HEK293 (cell line): ENCODE measurements at regions of chr20 and their contacts with region 1.

Region 1: DNA sequence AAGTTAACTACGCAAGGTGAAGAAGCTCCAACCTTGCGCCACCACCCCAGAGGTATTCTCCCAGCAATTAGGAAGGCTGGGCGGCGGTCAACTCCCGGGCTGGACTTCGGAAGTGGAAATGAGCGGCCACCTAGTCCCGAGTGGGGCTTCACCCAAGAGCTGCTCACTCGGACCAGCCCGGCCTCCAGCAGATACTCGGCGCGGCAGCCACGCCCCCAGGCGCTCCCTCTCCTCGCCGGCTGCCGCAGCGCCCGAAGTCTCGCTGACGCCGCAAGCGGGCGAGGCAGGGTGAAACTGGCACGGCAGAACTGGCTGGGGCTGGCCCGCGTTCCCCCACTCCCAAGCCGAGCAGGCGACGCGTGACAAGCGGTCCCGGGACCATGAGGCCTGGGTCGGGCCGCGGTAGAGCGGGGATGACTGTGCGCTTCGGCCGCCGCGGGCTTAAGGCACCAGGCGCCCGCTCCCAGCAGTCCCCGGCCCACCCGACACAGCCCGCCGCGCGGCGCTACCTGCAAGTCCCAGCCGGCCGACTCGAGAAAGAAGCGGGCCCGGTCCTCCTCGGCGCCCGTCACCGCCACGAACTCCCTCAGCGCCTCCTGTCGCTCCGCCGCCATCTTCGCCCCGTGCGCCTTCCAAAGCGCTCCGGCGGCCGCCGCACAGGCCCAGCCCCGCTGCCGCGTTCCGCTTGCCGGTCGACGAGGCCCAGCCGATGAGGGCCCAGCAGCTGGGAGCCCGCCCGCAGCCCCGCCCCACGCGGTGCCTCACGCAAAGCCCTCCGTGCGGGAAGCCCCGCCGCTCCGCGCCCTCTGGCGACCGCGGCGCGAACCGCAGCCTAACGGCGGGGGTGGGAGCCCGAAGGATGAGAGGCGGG is at the start of gene NSFL1C:
- H3K4me3 ChIP-seq: peak within 1 kb of the TSS; percentile 87
- H3K27ac ChIP-seq: peak within 1 kb of the TSS; percentile 89
- H3K4me1 ChIP-seq: peaks cover 8% of the 10 kb centered on the region
- CTCF ChIP-seq: peak; percentile 63

Region 2: DNA sequence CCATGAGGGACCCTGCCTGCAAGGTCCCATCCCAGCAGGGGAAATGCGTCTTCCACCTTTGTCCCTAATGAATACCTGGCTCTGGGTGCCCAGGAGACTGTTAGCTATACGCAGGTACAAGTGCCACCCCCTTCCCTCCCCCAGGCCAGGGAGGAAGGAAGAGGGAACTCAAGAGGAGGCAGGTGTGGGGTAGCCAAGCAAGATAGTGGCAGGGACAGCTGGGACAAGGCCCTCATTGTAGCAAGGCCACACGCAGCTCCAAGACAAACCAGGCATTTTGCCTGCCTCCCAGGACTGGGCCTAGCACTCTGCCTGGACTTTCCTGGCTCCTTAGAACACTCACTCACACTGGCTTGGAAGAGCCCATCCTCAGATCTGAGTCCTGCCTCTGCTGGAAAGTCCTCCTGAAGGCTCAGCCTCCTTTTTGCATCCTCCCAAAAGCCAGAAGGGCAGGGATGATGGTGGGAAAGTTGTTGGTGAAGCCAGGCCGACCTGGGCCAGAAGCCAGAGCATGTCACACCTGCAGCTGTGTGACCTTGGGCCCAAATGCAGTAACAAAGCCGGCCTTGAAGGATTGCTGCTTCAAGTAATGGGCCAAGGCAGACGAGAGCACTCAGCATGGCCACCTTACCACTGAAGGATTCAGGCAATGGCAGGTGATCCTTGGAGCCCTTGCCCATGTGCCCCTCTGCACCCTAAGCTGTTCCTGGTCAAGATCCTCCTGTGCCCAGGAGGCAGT is 172.6 kb before region 1 on chr20:
- CTCF ChIA-PET with region 1: no interaction called
- POLR2A ChIA-PET with region 1: no interaction called
- H3K4me3 ChIP-seq: no peak overlapping the region
- H3K27ac ChIP-seq: no peak overlapping the region
- H3K4me1 ChIP-seq: no peaks in the 10 kb centered on the region
- CTCF ChIP-seq: no peak

Region 3: GRCh38 chr20:1456300-1456699 is 10.1 kb before region 1 on chr20:
- CTCF ChIA-PET with region 1: interaction called, 17 read pairs
- POLR2A ChIA-PET with region 1: interaction called, 4 read pairs
- H3K4me3 ChIP-seq: no peak overlapping the region
- H3K27ac ChIP-seq: no peak overlapping the region
- H3K4me1 ChIP-seq: no peaks in the 10 kb centered on the region
- CTCF ChIP-seq: no peak